Vagina (tissue), 2 donors: ENCODE measurements at regions of chr2 and their contacts with region 1.

Region 1: GRCh38 chr2:193670478-193670877 is 1475.7 kb upstream of the TMEFF2 start:
- DNase-seq: no peak
- H3K4me3 ChIP-seq: no peak overlapping the region
- H3K27ac ChIP-seq: no peak overlapping the region
- H3K4me1 ChIP-seq: no peaks in the 10 kb centered on the region
- H3K27me3 ChIP-seq: no peaks in the 10 kb centered on the region
- CTCF ChIP-seq: no peak
- POLR2A ChIP-seq: no peak

Region 2: GRCh38 chr2:193608451-193608850 is 62.0 kb before region 1 on chr2:
- intact Hi-C with region 1: no loop called
- DNase-seq: no peak
- H3K4me3 ChIP-seq: no peak overlapping the region
- H3K27ac ChIP-seq: no peak overlapping the region
- H3K4me1 ChIP-seq: no peaks in the 10 kb centered on the region
- H3K27me3 ChIP-seq: no peaks in the 10 kb centered on the region
- CTCF ChIP-seq: no peak
- POLR2A ChIP-seq: no peak

Region 3: GRCh38 chr2:194332799-194333497 is 662.5 kb after region 1 on chr2:
- intact Hi-C with region 1: loop called (anchors 5 kb)
- DNase-seq: no peak
- H3K4me3 ChIP-seq: no peak overlapping the region
- H3K27ac ChIP-seq: no peak overlapping the region
- H3K4me1 ChIP-seq: no peaks in the 10 kb centered on the region
- H3K27me3 ChIP-seq: no peaks in the 10 kb centered on the region
- CTCF ChIP-seq: no peak
- POLR2A ChIP-seq: no peak